SK-N-SH (cell line): ENCODE measurements at regions of chr5 and their contacts with region 1.

Region 1: DNA sequence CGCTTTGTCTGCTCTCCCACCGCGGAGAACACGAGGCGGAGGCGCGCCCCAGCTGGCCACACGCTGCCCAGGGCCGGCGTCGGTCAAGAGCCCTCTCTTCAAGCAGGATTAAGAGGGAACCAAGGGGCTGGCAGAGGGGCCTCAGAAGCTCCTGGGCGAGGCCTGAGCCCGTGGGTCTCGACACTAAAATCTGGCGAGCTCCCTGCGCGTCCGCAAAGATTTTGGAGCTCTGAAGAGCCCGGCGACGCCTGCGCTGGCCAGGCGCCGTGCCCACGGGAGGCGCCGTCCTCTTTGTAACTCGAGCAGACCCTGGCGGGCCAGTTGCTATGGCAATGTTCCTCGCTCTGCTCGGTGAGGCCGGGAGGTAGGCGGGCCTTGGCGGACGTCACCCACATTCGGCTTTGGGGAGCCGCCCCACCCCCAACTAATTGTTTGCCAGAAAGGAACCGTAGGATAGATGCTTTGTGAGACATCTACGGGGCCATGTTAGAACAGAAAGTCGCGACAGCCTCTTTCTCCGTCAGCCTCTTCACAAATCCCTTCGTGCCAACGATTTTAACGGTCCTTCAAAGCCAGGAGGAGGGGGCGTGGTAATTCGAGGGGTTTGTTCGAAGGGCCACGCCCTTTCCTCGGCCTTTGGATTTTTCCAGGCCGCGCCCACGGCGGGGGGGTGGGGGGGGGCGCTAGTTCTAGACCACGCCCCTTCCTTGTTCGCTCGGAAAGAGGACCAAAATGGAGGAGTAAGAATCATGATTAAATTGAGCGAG is 714 bp upstream of the CNOT8 start:
- DNase-seq: peak; percentile 91
- H3K4me3 ChIP-seq: peak overlapping the region; percentile 62 to 86
- H3K27ac ChIP-seq: peak overlapping the region; percentile 99 to 100
- H3K4me1 ChIP-seq: peaks cover 14 to 17% of the 10 kb centered on the region in 2 experiments
- H3K27me3 ChIP-seq: no peaks in the 10 kb centered on the region
- CTCF ChIP-seq: peak; percentile 22; the same call in 1 of the 2 replicates
- EP300 ChIP-seq: peak in 1 of 2 experiments; percentile 27; a peak in 1 of 4 replicates
- RAD21 ChIP-seq: no peak

Region 2: DNA sequence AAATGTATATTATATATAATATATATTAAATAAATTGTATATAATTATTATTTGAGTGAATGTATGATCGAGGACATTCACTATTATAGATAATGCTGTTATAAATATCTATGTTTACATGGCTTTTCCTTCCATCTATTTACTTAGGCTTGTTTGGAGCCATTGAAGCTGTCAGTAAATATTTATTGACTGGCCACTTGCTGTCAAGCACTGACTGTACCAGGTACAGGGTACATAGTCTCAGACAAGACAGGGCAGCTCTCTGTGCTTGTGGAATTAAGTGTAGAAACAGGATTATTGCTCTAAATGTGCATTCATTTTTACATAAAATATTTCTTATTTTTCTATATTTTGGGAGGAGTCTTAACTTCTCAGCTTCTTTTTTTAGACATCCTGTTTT is 23.7 kb before region 1 on chr5:
- CTCF ChIA-PET with region 1: interaction called, 5 read pairs
- POLR2A ChIA-PET with region 1: interaction called, 16 read pairs
- DNase-seq: no peak
- H3K4me3 ChIP-seq: no peak overlapping the region
- H3K27ac ChIP-seq: peak overlapping the region in 1 of 2 experiments; percentile 86; a peak in 1 of 4 replicates
- H3K4me1 ChIP-seq: peaks cover 9 to 14% of the 10 kb centered on the region in 2 experiments
- H3K27me3 ChIP-seq: no peaks in the 10 kb centered on the region
- CTCF ChIP-seq: no peak
- EP300 ChIP-seq: no peak
- RAD21 ChIP-seq: no peak

Region 3: GRCh38 chr5:155418960-155419579 is 561.4 kb after region 1 on chr5:
- CTCF ChIA-PET with region 1: no interaction called
- POLR2A ChIA-PET with region 1: no interaction called
- DNase-seq: no peak
- H3K4me3 ChIP-seq: no peak overlapping the region
- H3K27ac ChIP-seq: no peak overlapping the region
- H3K4me1 ChIP-seq: no peaks in the 10 kb centered on the region
- H3K27me3 ChIP-seq: no peaks in the 10 kb centered on the region
- CTCF ChIP-seq: no peak
- EP300 ChIP-seq: no peak
- RAD21 ChIP-seq: no peak